ENCODE measurements at regions of chr3 and their contacts with region 1.

Region 1: DNA sequence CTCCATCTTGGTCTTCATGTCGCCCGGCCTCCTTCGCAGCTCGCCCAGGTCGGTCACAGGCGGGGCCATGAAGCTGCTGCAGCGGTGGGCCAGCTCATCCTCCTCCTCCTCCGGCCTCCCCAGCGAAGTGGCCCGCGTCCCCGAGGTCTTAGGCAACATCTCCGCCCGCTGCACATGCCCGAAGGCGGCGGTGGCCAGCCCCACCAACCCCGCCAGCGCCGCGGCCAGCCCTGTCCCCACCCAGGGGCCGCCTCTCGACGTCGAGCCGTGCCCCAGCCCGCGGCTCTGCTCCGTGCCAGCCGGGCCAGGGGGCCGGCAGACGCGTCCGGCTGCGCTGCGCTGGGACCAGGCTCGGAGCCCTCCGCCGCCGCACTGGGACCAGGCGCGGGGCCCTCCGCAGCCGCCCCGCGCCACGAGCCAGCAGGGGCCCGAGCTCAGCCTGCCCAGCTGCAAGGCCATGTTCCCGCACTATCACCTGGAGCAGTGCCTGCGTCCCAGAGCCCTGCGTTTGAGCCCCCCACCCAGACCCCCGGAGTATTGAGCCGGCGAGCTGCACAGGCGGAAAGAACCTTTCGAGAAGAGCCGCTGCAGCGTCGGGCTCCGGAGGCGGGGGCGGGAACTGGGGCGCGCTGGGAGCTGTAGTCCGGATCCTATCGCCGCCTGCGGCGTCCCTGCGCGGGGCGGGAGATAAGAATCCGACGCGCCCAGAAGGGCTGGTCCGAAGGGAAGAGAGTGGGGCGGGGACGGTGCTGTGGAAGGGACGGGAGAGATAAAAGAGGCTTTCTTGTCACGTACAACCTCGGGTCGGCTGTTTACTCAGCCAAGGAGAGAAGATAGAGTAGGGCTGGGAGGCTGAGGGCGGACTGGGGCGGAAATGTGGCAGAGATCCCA is at the start of gene CPOX:
- DNase-seq: peak; percentile 95
- ATAC-seq: peak; percentile 99
- total RNA-seq, gene CPOX: 16.9 TPM

Region 2: DNA sequence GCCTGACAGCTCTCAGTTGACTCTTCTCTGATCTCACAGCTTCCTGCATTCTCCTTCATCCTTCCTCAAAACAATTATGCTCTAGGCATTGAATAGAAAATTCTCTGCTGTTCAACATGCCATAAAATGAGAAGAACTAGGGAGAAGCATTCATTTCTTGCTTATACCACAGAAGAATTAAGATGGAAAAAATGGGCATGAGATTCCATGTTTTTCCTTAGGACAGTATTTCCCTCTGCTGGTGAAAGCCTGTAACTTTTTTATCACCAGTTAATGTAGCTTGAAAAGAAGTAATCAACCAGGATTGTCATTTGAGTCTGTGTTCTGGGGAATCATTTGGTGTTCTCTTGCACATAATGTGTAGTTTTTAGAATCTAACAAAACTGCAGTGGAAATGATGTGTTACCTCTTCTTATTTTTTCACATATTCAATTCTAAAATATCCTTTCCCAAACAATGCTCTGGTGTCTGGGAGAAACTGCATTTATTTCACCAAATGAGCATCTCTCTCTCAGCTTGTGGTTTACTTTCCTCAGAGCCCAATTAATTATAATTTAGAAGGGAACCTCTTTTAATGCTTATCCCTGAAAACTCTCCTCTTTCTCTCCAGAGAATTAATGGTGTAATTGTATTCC is 401.0 kb after region 1 on chr3:
- intact Hi-C with region 1: loop called (anchors 10 kb)
- DNase-seq: no peak
- ATAC-seq: peak; percentile 68

Measured in sciatic nerve (tissue), 2 donors.